CD8-positive, alpha-beta T cell (primary cell): ENCODE measurements at regions of chr22 and their contacts with region 1.

Region 1: GRCh38 chr22:22959147-22959827 is 71.7 kb downstream of the IGLL5 start:
- DNase-seq: peak; percentile 48 to 89 (median 80)
- ATAC-seq: peak; percentile 60
- H3K4me3 ChIP-seq: no peak overlapping the region
- H3K4me3 Mint-ChIP-seq: no peak overlapping the region
- H3K27ac ChIP-seq: no peak overlapping the region
- H3K27ac Mint-ChIP-seq: no peak overlapping the region
- H3K4me1 ChIP-seq: no peaks in the 10 kb centered on the region
- H3K4me1 Mint-ChIP-seq: peaks cover 5% of the 10 kb centered on the region
- H3K27me3 ChIP-seq: no peaks in the 10 kb centered on the region
- H3K27me3 Mint-ChIP-seq: peaks cover 10% of the 10 kb centered on the region
- CTCF ChIP-seq: peak; percentile 98

Region 2: DNA sequence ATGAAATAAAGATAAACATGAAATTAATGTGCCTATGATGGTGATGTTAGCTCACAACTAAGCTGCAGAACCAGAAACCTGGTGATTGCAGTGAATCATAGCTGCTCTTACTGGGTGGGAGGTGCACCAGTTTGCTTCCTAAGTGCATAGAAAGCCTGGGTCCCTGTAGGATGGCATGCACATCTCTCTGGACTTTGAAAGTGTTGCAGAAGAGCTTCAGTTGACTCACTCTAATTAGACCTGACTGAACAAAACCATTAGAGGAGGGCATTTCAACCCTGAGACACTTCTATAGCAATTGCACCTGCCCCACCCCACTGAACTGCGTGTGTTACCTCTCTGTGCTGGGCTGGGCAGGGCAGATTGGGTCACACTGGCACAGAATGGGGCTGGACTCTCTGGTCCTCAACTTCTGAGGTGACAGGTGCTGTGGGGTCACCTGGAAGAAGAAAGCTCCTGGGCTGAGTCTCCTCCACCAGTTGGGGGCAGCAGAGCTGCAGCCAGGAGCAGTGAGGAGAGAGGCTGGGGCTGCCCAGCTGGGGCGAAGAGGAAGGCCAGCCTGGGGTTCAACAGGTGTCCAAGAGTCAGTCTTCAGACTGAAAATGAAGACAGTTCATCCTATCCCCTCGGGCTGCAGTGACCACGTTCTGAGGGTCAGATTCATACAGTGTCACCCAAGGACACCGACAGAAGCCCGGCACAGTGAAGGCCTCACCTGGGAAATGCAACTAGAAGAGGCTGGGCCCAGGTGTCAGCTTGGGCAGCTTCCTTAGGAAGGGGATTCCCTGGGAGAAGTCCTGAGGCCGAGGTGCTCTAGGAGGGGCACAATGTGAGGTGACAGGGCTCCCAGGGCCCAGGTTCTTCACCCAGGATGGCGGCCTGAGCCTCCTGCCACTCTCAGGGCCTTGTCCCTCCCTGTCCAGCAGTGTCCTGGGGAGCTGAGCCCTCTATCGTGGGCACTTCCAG is 256.8 kb before region 1 on chr22:
- CTCF ChIA-PET with region 1: interaction called, 14 read pairs
- POLR2A ChIA-PET with region 1: no interaction called
- intact Hi-C with region 1: no loop called
- DNase-seq: peak in 3 of 9 experiments; percentile 15 to 43 (median 25)
- ATAC-seq: no peak
- H3K4me3 ChIP-seq: no peak overlapping the region
- H3K4me3 Mint-ChIP-seq: no peak overlapping the region
- H3K27ac ChIP-seq: no peak overlapping the region
- H3K27ac Mint-ChIP-seq: no peak overlapping the region
- H3K4me1 ChIP-seq: no peaks in the 10 kb centered on the region
- H3K4me1 Mint-ChIP-seq: no peaks in the 10 kb centered on the region
- H3K27me3 ChIP-seq: no peaks in the 10 kb centered on the region
- H3K27me3 Mint-ChIP-seq: no peaks in the 10 kb centered on the region
- CTCF ChIP-seq: no peak

Region 3: GRCh38 chr22:22787786-22788459 is 171.4 kb before region 1 on chr22:
- CTCF ChIA-PET with region 1: interaction called, 21 read pairs
- POLR2A ChIA-PET with region 1: no interaction called
- intact Hi-C with region 1: loop called in 1 of 2 experiments (anchors 1 kb)
- DNase-seq: peak; percentile 35 to 86 (median 75)
- ATAC-seq: peak; percentile 80
- H3K4me3 ChIP-seq: no peak overlapping the region
- H3K4me3 Mint-ChIP-seq: no peak overlapping the region
- H3K27ac ChIP-seq: peak overlapping the region in 1 of 2 experiments; percentile 69
- H3K27ac Mint-ChIP-seq: peak overlapping the region; percentile 85
- H3K4me1 ChIP-seq: peaks cover 38% of the 10 kb centered on the region
- H3K4me1 Mint-ChIP-seq: peaks cover 54% of the 10 kb centered on the region
- H3K27me3 ChIP-seq: no peaks in the 10 kb centered on the region
- H3K27me3 Mint-ChIP-seq: no peaks in the 10 kb centered on the region
- CTCF ChIP-seq: peak; percentile 78

Region 4: GRCh38 chr22:22836635-22837034 is 122.7 kb before region 1 on chr22:
- CTCF ChIA-PET with region 1: no interaction called
- POLR2A ChIA-PET with region 1: no interaction called
- intact Hi-C with region 1: no loop called
- DNase-seq: peak in 1 of 9 experiments; percentile 21
- ATAC-seq: no peak
- H3K4me3 ChIP-seq: no peak overlapping the region
- H3K4me3 Mint-ChIP-seq: no peak overlapping the region
- H3K27ac ChIP-seq: no peak overlapping the region
- H3K27ac Mint-ChIP-seq: no peak overlapping the region
- H3K4me1 ChIP-seq: peaks cover 12% of the 10 kb centered on the region
- H3K4me1 Mint-ChIP-seq: peaks cover 31% of the 10 kb centered on the region
- H3K27me3 ChIP-seq: no peaks in the 10 kb centered on the region
- H3K27me3 Mint-ChIP-seq: no peaks in the 10 kb centered on the region
- CTCF ChIP-seq: no peak

Region 5: GRCh38 chr22:22903355-22903777 is 55.9 kb before region 1 on chr22:
- CTCF ChIA-PET with region 1: no interaction called
- POLR2A ChIA-PET with region 1: no interaction called
- intact Hi-C with region 1: no loop called
- DNase-seq: no peak
- ATAC-seq: no peak
- H3K4me3 ChIP-seq: no peak overlapping the region
- H3K4me3 Mint-ChIP-seq: no peak overlapping the region
- H3K27ac ChIP-seq: no peak overlapping the region
- H3K27ac Mint-ChIP-seq: no peak overlapping the region
- H3K4me1 ChIP-seq: no peaks in the 10 kb centered on the region
- H3K4me1 Mint-ChIP-seq: no peaks in the 10 kb centered on the region
- H3K27me3 ChIP-seq: no peaks in the 10 kb centered on the region
- H3K27me3 Mint-ChIP-seq: no peaks in the 10 kb centered on the region
- CTCF ChIP-seq: no peak

Region 6: GRCh38 chr22:22928666-22929380 is 30.5 kb before region 1 on chr22:
- CTCF ChIA-PET with region 1: interaction called, 29 read pairs
- POLR2A ChIA-PET with region 1: no interaction called
- intact Hi-C with region 1: no loop called
- DNase-seq: peak in 8 of 9 experiments; percentile 15 to 78 (median 35)
- ATAC-seq: peak; percentile 89
- H3K4me3 ChIP-seq: no peak overlapping the region
- H3K4me3 Mint-ChIP-seq: no peak overlapping the region
- H3K27ac ChIP-seq: peak overlapping the region in 1 of 2 experiments; percentile 31
- H3K27ac Mint-ChIP-seq: no peak overlapping the region
- H3K4me1 ChIP-seq: peaks cover 11% of the 10 kb centered on the region
- H3K4me1 Mint-ChIP-seq: peaks cover 11% of the 10 kb centered on the region
- H3K27me3 ChIP-seq: no peaks in the 10 kb centered on the region
- H3K27me3 Mint-ChIP-seq: no peaks in the 10 kb centered on the region
- CTCF ChIP-seq: no peak

Region 7: DNA sequence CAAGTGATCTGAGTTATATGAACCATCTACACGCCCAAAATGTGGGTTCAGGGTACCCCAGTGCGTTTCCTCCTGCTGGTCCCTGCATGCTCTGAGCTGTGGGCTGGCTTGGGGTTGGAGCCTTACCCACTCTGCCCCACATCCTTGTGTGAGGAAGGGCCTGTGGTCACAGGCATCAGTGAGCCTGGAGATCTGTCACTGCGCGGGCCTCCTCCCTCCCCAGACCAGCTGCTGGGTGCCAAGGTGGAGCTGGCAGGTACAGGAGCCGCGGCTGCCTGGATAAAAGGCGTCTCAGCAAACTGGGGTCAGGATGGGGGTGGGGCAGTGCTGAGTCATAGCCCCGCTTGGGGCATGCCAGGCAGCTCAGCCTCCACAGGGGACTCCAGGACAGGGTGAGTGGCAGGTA is 128.9 kb after region 1 on chr22:
- CTCF ChIA-PET with region 1: no interaction called
- POLR2A ChIA-PET with region 1: no interaction called
- intact Hi-C with region 1: no loop called
- DNase-seq: peak in 3 of 9 experiments; percentile 11 to 24 (median 21)
- ATAC-seq: no peak
- H3K4me3 ChIP-seq: no peak overlapping the region
- H3K4me3 Mint-ChIP-seq: no peak overlapping the region
- H3K27ac ChIP-seq: no peak overlapping the region
- H3K27ac Mint-ChIP-seq: no peak overlapping the region
- H3K4me1 ChIP-seq: no peaks in the 10 kb centered on the region
- H3K4me1 Mint-ChIP-seq: no peaks in the 10 kb centered on the region
- H3K27me3 ChIP-seq: no peaks in the 10 kb centered on the region
- H3K27me3 Mint-ChIP-seq: no peaks in the 10 kb centered on the region
- CTCF ChIP-seq: no peak

Region 8: GRCh38 chr22:23128269-23129108 is 169.2 kb after region 1 on chr22:
- CTCF ChIA-PET with region 1: interaction called, 498 read pairs
- POLR2A ChIA-PET with region 1: interaction called, 6 read pairs
- intact Hi-C with region 1: loop called in 1 of 2 experiments (anchors 1 kb)
- DNase-seq: peak; percentile 45 to 87 (median 78)
- ATAC-seq: peak; percentile 95
- H3K4me3 ChIP-seq: no peak overlapping the region
- H3K4me3 Mint-ChIP-seq: no peak overlapping the region
- H3K27ac ChIP-seq: no peak overlapping the region
- H3K27ac Mint-ChIP-seq: no peak overlapping the region
- H3K4me1 ChIP-seq: no peaks in the 10 kb centered on the region
- H3K4me1 Mint-ChIP-seq: peaks cover 3% of the 10 kb centered on the region
- H3K27me3 ChIP-seq: no peaks in the 10 kb centered on the region
- H3K27me3 Mint-ChIP-seq: no peaks in the 10 kb centered on the region
- CTCF ChIP-seq: peak; percentile 78

Region 9: DNA sequence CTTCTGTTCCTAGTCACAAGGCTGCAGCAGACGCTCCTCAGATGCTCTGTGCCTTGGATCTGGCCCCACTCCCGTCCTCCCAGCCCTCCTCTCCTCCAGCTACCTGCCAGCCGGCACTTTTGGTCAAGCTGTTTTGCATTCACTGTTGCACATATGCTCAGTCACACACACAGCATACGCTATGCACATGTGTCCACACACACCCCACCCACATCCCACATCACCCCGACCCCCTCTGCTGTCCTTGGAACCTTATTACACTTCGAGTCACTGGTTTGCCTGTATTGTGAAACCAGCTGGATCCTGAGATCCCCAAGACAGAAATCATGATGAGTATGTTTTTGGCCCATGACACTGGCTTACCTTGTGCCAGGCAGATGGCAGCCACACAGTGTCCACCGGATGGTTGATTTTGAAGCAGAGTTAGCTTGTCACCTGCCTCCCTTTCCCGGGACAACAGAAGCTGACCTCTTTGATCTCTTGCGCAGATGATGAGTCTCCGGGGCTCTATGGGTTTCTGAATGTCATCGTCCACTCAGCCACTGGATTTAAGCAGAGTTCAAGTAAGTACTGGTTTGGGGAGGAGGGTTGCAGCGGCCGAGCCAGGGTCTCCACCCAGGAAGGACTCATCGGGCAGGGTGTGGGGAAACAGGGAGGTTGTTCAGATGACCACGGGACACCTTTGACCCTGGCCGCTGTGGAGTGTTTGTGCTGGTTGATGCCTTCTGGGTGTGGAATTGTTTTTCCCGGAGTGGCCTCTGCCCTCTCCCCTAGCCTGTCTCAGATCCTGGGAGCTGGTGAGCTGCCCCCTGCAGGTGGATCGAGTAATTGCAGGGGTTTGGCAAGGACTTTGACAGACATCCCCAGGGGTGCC is 330.8 kb after region 1 on chr22:
- CTCF ChIA-PET with region 1: interaction called, 12 read pairs
- POLR2A ChIA-PET with region 1: no interaction called
- intact Hi-C with region 1: no loop called
- DNase-seq: peak; percentile 24 to 73 (median 54)
- ATAC-seq: peak; percentile 84
- H3K4me3 ChIP-seq: no peak overlapping the region
- H3K4me3 Mint-ChIP-seq: no peak overlapping the region
- H3K27ac ChIP-seq: no peak overlapping the region
- H3K27ac Mint-ChIP-seq: peak overlapping the region; percentile 37
- H3K4me1 ChIP-seq: no peaks in the 10 kb centered on the region
- H3K4me1 Mint-ChIP-seq: no peaks in the 10 kb centered on the region
- H3K27me3 ChIP-seq: no peaks in the 10 kb centered on the region
- H3K27me3 Mint-ChIP-seq: no peaks in the 10 kb centered on the region
- CTCF ChIP-seq: peak; percentile 78